ENCODE measurements at regions of chr1 and their contacts with region 1.

Region 1: GRCh38 chr1:2412519-2413233 is at the start of gene PEX10:
- DNase-seq: peak; percentile 62
- H3K4me3 ChIP-seq: peak within 1 kb of the TSS; percentile 83 to 85 (median 85)
- H3K27ac ChIP-seq: peak within 1 kb of the TSS; percentile 69
- H3K4me1 ChIP-seq: peaks cover 36% of the 10 kb centered on the region
- H3K27me3 ChIP-seq: no peaks in the 10 kb centered on the region
- CTCF ChIP-seq: peak in 1 of 3 experiments; percentile 17
- polyA plus RNA-seq, gene PEX10: 13.8 to 17.6 TPM (median 17.0 TPM) in 3 replicates

Region 2: GRCh38 chr1:2372551-2373490 is 39.9 kb before region 1 on chr1:
- dilution Hi-C with region 1: no loop called
- DNase-seq: no peak
- H3K4me3 ChIP-seq: no peak overlapping the region
- H3K27ac ChIP-seq: no peak overlapping the region
- H3K4me1 ChIP-seq: no peaks in the 10 kb centered on the region
- H3K27me3 ChIP-seq: peaks cover 16% of the 10 kb centered on the region
- CTCF ChIP-seq: no peak

Region 3: GRCh38 chr1:3410142-3410925 is 997.7 kb after region 1 on chr1:
- dilution Hi-C with region 1: loop called (anchors 25 kb)
- DNase-seq: no peak
- H3K4me3 ChIP-seq: no peak overlapping the region
- H3K27ac ChIP-seq: no peak overlapping the region
- H3K4me1 ChIP-seq: peaks cover 4% of the 10 kb centered on the region
- H3K27me3 ChIP-seq: peaks cover 6% of the 10 kb centered on the region
- CTCF ChIP-seq: peak in 2 of 3 experiments; percentile 54 to 74